Endothelial cell of umbilical vein (primary cell): ENCODE measurements at regions of chr5 and their contacts with region 1.

Region 1: DNA sequence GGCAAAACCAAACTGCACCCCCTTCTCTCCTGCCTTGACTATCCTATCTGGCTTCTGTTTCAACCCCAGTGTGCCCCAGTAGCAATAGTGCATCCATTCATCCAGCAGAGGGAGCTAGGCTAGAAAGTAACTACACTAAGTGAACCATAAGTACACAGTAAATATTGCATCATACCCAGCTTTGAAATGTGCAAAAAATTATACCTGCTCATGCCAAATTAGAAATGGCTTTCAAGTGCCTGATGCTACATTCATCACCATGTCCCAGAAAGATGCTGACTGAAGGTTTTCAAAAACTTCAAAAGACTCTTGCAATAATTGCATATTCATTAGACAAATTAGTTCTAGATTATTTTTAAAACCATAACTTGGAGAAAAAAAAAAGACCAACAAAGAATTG is 153.5 kb downstream of the PRELID2 start:
- DNase-seq: peak; percentile 75
- H3K4me3 ChIP-seq: no peak overlapping the region
- H3K27ac ChIP-seq: no peak overlapping the region
- H3K4me1 ChIP-seq: no peaks in the 10 kb centered on the region
- H3K27me3 ChIP-seq: no peaks in the 10 kb centered on the region
- CTCF ChIP-seq: peak; percentile 78 to 86
- POLR2A ChIP-seq: no peak

Region 2: DNA sequence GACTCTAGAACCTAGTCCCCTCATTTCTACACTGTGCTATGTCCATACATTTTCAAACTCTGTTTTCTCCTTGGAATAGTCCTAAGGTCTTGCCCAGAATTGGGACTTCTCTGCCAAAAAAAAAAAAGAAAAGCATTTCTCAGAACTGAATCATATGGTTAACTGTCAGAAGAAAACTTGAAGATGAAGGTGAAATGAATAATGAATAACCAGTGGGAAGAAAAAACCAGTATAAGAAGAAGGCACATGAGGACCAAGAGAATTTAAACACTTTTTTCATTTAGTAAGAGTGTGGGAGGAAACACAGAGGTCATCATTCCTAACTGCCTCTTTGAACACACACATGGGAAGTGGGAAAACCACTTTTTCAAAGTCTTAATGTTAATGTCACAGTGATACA is 44.3 kb before region 1 on chr5:
- CTCF ChIA-PET with region 1: no interaction called
- POLR2A ChIA-PET with region 1: no interaction called
- dilution Hi-C with region 1: no loop called
- intact Hi-C with region 1: no loop called
- DNase-seq: no peak
- H3K4me3 ChIP-seq: no peak overlapping the region
- H3K27ac ChIP-seq: no peak overlapping the region
- H3K4me1 ChIP-seq: no peaks in the 10 kb centered on the region
- H3K27me3 ChIP-seq: no peaks in the 10 kb centered on the region
- CTCF ChIP-seq: no peak
- POLR2A ChIP-seq: no peak

Region 3: GRCh38 chr5:145660897-145661640 is 20.6 kb before region 1 on chr5:
- CTCF ChIA-PET with region 1: interaction called, 10 read pairs
- POLR2A ChIA-PET with region 1: no interaction called
- dilution Hi-C with region 1: no loop called
- intact Hi-C with region 1: no loop called
- DNase-seq: no peak
- H3K4me3 ChIP-seq: no peak overlapping the region
- H3K27ac ChIP-seq: no peak overlapping the region
- H3K4me1 ChIP-seq: no peaks in the 10 kb centered on the region
- H3K27me3 ChIP-seq: no peaks in the 10 kb centered on the region
- CTCF ChIP-seq: no peak
- POLR2A ChIP-seq: no peak

Region 4: GRCh38 chr5:145718956-145719355 is 37.3 kb after region 1 on chr5:
- CTCF ChIA-PET with region 1: interaction called, 13 read pairs
- POLR2A ChIA-PET with region 1: no interaction called
- dilution Hi-C with region 1: no loop called
- intact Hi-C with region 1: no loop called
- DNase-seq: peak; percentile 24
- H3K4me3 ChIP-seq: no peak overlapping the region
- H3K27ac ChIP-seq: no peak overlapping the region
- H3K4me1 ChIP-seq: no peaks in the 10 kb centered on the region
- H3K27me3 ChIP-seq: no peaks in the 10 kb centered on the region
- CTCF ChIP-seq: peak; percentile 22 to 36
- POLR2A ChIP-seq: no peak

Region 5: DNA sequence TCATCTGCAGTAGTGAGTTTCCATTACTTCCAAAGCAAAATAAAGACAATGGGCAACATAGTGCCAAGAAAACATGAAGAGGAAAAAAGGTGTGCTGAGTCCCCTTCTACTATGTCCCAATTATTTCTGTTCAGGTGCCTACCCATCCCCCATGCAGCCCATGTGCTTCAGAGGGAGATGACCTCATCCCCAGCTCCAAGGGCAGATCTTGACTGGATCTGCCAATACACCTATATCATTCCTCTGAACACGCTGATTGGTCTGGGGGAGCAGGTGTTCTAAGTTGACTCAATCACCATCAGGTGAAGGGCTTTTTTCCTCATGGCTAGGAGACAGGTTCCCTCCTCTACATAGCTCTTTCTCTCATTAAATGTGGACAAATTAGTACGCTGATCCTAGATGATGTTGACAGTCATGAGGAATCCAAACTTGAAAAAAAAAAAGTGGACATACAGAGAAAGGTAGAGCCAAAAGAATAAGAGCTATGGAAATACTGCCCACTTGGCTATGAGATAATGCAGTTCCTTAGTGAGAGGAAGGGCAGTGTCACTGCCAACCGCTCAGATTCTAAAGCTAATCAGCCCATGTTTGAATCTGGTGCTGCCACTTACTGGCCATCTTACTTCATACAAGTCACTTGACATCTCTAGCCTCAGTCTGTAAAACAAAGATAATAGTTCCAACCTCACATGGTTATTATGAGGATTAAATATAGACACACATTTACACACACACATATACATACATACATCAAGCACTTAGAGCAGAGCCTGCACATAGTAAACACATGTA is 130.3 kb after region 1 on chr5:
- CTCF ChIA-PET with region 1: interaction called, 56 read pairs
- POLR2A ChIA-PET with region 1: no interaction called
- dilution Hi-C with region 1: no loop called
- intact Hi-C with region 1: loop called (anchors 1 kb)
- DNase-seq: peak; percentile 69
- H3K4me3 ChIP-seq: no peak overlapping the region
- H3K27ac ChIP-seq: no peak overlapping the region
- H3K4me1 ChIP-seq: no peaks in the 10 kb centered on the region
- H3K27me3 ChIP-seq: no peaks in the 10 kb centered on the region
- CTCF ChIP-seq: peak; percentile 27 to 43
- POLR2A ChIP-seq: no peak